ENCODE measurements at regions of chr9 and their contacts with region 1.

Region 1: DNA sequence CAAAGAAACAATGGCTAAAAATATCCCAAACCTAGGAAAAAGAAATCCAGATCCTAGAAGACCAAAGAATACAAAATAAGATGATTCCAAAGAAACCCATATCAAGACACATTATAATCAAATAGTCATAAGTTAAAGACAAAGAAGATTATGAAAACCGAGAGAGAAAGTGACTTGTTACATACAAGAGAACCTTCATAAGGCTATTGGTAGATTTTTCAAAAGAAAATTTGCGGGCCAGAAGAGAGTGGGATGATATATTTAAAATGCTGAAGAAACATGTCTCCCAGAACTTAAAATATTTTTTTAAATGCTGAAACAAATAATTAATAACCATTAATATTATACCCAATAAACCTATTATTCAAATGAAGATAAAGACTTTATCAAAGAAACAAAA is 687.3 kb downstream of the TLE4 start:
- DNase-seq: no peak
- H3K4me3 ChIP-seq: no peak overlapping the region
- H3K27ac ChIP-seq: no peak overlapping the region
- H3K4me1 ChIP-seq: no peaks in the 10 kb centered on the region
- H3K27me3 ChIP-seq: no peaks in the 10 kb centered on the region
- CTCF ChIP-seq: no peak
- EP300 ChIP-seq: no peak
- POLR2A ChIP-seq: no peak

Region 2: GRCh38 chr9:80503671-80504281 is 244.7 kb after region 1 on chr9:
- in situ Hi-C with region 1: no loop called
- intact Hi-C with region 1: no loop called
- DNase-seq: no peak
- H3K4me3 ChIP-seq: no peak overlapping the region
- H3K27ac ChIP-seq: peak overlapping the region in 1 of 4 donors; percentile 42
- H3K4me1 ChIP-seq: peaks cover 0 to 20% (median 4%) of the 10 kb centered on the region in 4 donors
- H3K27me3 ChIP-seq: no peaks in the 10 kb centered on the region
- CTCF ChIP-seq: no peak
- EP300 ChIP-seq: no peak
- POLR2A ChIP-seq: no peak

Region 3: GRCh38 chr9:82036086-82036485 is 1777.0 kb after region 1 on chr9:
- in situ Hi-C with region 1: no loop called
- intact Hi-C with region 1: loop called (anchors 5 kb)
- DNase-seq: no peak
- H3K4me3 ChIP-seq: no peak overlapping the region
- H3K27ac ChIP-seq: no peak overlapping the region
- H3K4me1 ChIP-seq: no peaks in the 10 kb centered on the region
- H3K27me3 ChIP-seq: no peaks in the 10 kb centered on the region
- CTCF ChIP-seq: no peak
- EP300 ChIP-seq: no peak
- POLR2A ChIP-seq: no peak